ENCODE measurements at regions of chr4 and their contacts with region 1.

Region 1: DNA sequence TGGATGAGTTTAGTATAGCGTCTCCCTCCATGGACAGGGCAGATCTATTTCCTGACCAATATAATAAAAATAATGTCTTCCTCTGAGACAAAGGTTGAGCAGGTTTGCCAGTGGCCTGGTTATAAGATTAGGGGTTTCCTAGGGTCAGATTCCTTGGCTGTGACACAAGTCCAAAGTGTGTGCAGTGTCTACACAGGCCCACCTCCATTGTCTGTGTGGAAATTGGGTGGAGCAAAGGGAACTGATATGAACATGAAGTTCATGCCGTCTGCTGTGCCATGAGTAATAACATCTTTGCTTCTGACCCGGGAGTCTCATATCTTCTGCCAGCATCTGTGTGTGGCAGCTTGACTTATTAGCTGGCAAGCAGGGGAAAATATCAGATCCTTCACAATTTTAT is 187.7 kb upstream of the BOD1L1 start:
- DNase-seq: no peak

Region 2: DNA sequence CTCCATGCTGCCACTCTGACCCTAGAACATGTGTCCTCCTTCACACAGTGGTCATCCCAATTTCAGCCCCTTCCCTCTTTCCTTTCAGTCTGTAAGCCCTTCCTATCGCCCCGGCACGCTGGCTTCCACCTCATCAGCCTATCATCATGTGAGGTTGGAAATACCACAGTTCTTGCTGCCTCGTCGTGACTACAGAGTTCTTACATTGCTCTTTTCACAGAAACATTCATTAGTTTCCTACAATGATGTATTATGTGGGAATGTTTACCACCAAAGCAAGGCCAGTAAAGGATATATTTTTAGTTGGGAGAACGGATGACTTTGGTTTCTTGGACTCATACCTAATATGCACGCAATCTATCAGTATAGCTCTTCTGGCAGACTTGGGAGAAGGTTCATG is 18.2 kb before region 1 on chr4:
- intact Hi-C with region 1: loop called (anchors 2 kb)
- DNase-seq: no peak

Region 3: GRCh38 chr4:13944095-13944511 is 128.9 kb after region 1 on chr4:
- intact Hi-C with region 1: no loop called
- DNase-seq: no peak

Measured in cardiac septum (tissue), 1 donor.